ENCODE measurements at regions of chr10 and their contacts with region 1.

Region 1: GRCh38 chr10:121566755-121567154 is 31.5 kb downstream of the FGFR2 start:
- DNase-seq: no peak

Region 2: GRCh38 chr10:120770496-120770895 is 796.3 kb before region 1 on chr10:
- intact Hi-C with region 1: loop called in 1 of 2 experiments (anchors 5 kb)
- DNase-seq: no peak